Activated CD4-positive, alpha-beta T cell treated with anti-CD3 and anti-CD28 coated beads for 36 hours (primary cell): ENCODE measurements at regions of chr16 and their contacts with region 1.

Region 1: GRCh38 chr16:89711601-89712273 is 9.0 kb downstream of the VPS9D1 start:
- DNase-seq: peak; percentile 92
- ATAC-seq: peak; percentile 89
- H3K4me3 Mint-ChIP-seq: peak overlapping the region; percentile 76
- H3K27ac Mint-ChIP-seq: no peak overlapping the region
- H3K4me1 Mint-ChIP-seq: peaks cover 8% of the 10 kb centered on the region
- H3K27me3 Mint-ChIP-seq: no peaks in the 10 kb centered on the region

Region 2: GRCh38 chr16:89759746-89760340 is 48.1 kb after region 1 on chr16:
- CTCF ChIA-PET with region 1: interaction called, 8 read pairs
- POLR2A ChIA-PET with region 1: interaction called, 11 read pairs
- intact Hi-C with region 1: no loop called
- DNase-seq: no peak
- ATAC-seq: peak; percentile 48
- H3K4me3 Mint-ChIP-seq: no peak overlapping the region
- H3K27ac Mint-ChIP-seq: no peak overlapping the region
- H3K4me1 Mint-ChIP-seq: peaks cover 30% of the 10 kb centered on the region
- H3K27me3 Mint-ChIP-seq: no peaks in the 10 kb centered on the region